Ovary (tissue), 10 donors: ENCODE measurements at regions of chr1 and their contacts with region 1.

Region 1: GRCh38 chr1:28518000-28518744 is 12.3 kb downstream of the RCC1 start:
- DNase-seq: peak; percentile 90 to 96 (median 93)
- H3K4me3 ChIP-seq: peak overlapping the region; percentile 58
- H3K27ac ChIP-seq: peak overlapping the region; percentile 54 to 83
- H3K4me1 ChIP-seq: peaks cover 5% of the 10 kb centered on the region
- H3K27me3 ChIP-seq: no peaks in the 10 kb centered on the region
- CTCF ChIP-seq: peak; percentile 93 to 96 (median 96)
- EP300 ChIP-seq: no peak
- POLR2A ChIP-seq: peak; percentile 34

Region 2: GRCh38 chr1:28409090-28409489 is 109.1 kb before region 1 on chr1:
- intact Hi-C with region 1: loop called in 1 of 4 experiments (anchors 10 kb)
- DNase-seq: no peak
- H3K4me3 ChIP-seq: no peak overlapping the region
- H3K27ac ChIP-seq: no peak overlapping the region
- H3K4me1 ChIP-seq: no peaks in the 10 kb centered on the region
- H3K27me3 ChIP-seq: no peaks in the 10 kb centered on the region
- CTCF ChIP-seq: no peak
- EP300 ChIP-seq: no peak
- POLR2A ChIP-seq: no peak

Region 3: GRCh38 chr1:28591708-28592320 is 73.6 kb after region 1 on chr1 and contains the start of gene RAB42:
- intact Hi-C with region 1: loop called in 3 of 4 experiments (anchors 1 to 10 kb)
- DNase-seq: peak in 4 of 5 donors; percentile 27 to 56 (median 37)
- H3K4me3 ChIP-seq: peak within 1 kb of the TSS; percentile 38
- H3K27ac ChIP-seq: no peak within 1 kb of the TSS
- H3K4me1 ChIP-seq: peaks cover 2% of the 10 kb centered on the region
- H3K27me3 ChIP-seq: no peaks in the 10 kb centered on the region
- CTCF ChIP-seq: no peak
- EP300 ChIP-seq: no peak
- POLR2A ChIP-seq: no peak
- total RNA-seq, gene RAB42: 0.36 to 4.2 (median 0.89) TPM in 6 of 7 donors, not detected in the other